ENCODE measurements at regions of chr5 and their contacts with region 1.

Region 1: DNA sequence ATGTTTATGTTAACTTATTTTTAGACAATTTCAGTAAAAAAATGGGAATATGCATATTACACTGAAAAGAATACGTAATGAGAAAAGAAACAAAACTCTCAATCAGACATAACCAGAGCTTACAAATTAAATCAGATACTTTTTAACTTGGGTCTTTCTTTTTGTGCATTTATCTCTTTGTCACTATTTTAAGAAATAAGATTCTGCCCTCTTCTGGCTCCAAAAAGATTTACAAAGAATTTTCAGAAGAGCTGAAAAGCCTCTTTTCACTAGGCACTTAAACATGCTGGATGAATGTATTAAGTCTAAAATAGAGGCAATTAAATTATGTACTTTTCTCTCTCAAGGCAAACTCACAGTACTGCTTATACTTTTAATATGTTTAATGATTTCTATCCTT is 55.5 kb downstream of the CEP120 start:
- DNase-seq: no peak
- ATAC-seq: no peak
- H3K4me3 ChIP-seq: no peak overlapping the region
- H3K27ac ChIP-seq: no peak overlapping the region
- H3K4me1 ChIP-seq: no peaks in the 10 kb centered on the region
- H3K27me3 ChIP-seq: no peaks in the 10 kb centered on the region
- CTCF ChIP-seq: no peak

Region 2: DNA sequence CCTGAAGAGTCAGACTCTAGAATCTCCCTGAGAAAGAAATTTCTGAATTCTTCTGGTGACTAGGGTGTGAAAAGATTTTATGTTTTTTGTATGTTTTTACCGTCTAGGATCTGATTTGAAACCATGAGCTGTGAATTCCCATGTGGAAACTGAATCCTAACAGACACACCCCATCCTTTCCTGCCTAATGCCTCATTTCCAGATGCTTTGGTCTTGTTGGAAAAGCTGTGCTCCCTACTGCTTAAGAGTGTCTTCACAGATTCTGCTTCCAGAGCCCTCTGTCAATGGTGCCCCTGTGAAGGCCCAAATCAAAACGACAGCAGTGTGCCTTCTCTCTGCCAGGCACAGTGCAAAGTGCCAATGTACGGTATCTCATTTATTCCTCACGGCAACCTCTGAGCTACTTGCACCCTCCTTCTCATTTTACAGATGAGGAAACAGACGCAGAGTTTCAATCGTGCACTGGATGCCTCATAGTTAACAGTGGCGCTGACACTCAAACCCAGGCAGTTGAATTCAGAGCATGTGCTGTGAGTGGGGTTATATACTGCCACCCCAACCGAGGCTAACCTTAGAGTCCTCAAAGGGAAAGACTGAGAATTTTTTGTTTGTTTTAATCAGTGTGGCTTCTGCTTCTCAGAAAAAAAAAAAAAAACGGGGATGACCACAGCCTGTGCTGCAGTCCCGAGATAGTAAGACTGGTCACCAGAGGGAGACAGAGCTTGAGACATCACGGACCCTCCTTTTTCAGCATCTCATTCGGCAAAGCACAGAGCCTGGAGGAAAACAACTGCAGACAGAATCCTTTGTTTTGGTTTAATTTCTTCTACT is 867.3 kb before region 1 on chr5:
- intact Hi-C with region 1: loop called (anchors 10 kb)
- DNase-seq: no peak
- ATAC-seq: peak; percentile 47 to 55
- H3K4me3 ChIP-seq: no peak overlapping the region
- H3K27ac ChIP-seq: no peak overlapping the region
- H3K4me1 ChIP-seq: no peaks in the 10 kb centered on the region
- H3K27me3 ChIP-seq: no peaks in the 10 kb centered on the region
- CTCF ChIP-seq: peak; percentile 34